ENCODE measurements at regions of chr5 and their contacts with region 1.

Region 1: GRCh38 chr5:136042665-136043121 is 13.9 kb downstream of the TGFBI start:
- DNase-seq: peak; percentile 77
- H3K4me3 ChIP-seq: no peak overlapping the region
- H3K27ac ChIP-seq: peak overlapping the region; percentile 85
- H3K4me1 ChIP-seq: peaks cover 38% of the 10 kb centered on the region
- H3K27me3 ChIP-seq: no peaks in the 10 kb centered on the region
- CTCF ChIP-seq: no peak
- POLR2A ChIP-seq: peak; percentile 42

Region 2: GRCh38 chr5:135993880-135994636 is 48.6 kb before region 1 on chr5:
- CTCF ChIA-PET with region 1: interaction called, 3 read pairs
- POLR2A ChIA-PET with region 1: no interaction called
- dilution Hi-C with region 1: no loop called
- intact Hi-C with region 1: loop called (anchors 2 kb)
- DNase-seq: peak; percentile 79
- H3K4me3 ChIP-seq: no peak overlapping the region
- H3K27ac ChIP-seq: peak overlapping the region; percentile 72
- H3K4me1 ChIP-seq: peaks cover 35% of the 10 kb centered on the region
- H3K27me3 ChIP-seq: no peaks in the 10 kb centered on the region
- CTCF ChIP-seq: no peak
- POLR2A ChIP-seq: no peak

Region 3: GRCh38 chr5:136028782-136029742 is 13.6 kb before region 1 on chr5 and contains the start of gene TGFBI:
- CTCF ChIA-PET with region 1: interaction called, 10 read pairs
- POLR2A ChIA-PET with region 1: interaction called, 3 read pairs
- dilution Hi-C with region 1: no loop called
- intact Hi-C with region 1: loop called (anchors 1 kb)
- DNase-seq: peak; percentile 47
- H3K4me3 ChIP-seq: peak within 1 kb of the TSS; percentile 22 to 45 (median 26)
- H3K27ac ChIP-seq: no peak within 1 kb of the TSS
- H3K4me1 ChIP-seq: peaks cover 3% of the 10 kb centered on the region
- H3K27me3 ChIP-seq: no peaks in the 10 kb centered on the region
- CTCF ChIP-seq: peak in 1 of 2 donors; percentile 9
- POLR2A ChIP-seq: no peak
- total RNA-seq, gene TGFBI: 6.5 and 8.7 TPM in 2 replicates

Region 4: GRCh38 chr5:136053336-136054141 is 10.8 kb after region 1 on chr5:
- CTCF ChIA-PET with region 1: interaction called, 11 read pairs
- POLR2A ChIA-PET with region 1: no interaction called
- dilution Hi-C with region 1: no loop called
- intact Hi-C with region 1: loop called (anchors 1 kb)
- DNase-seq: peak; percentile 77
- H3K4me3 ChIP-seq: no peak overlapping the region
- H3K27ac ChIP-seq: peak overlapping the region; percentile 84
- H3K4me1 ChIP-seq: peaks cover 36% of the 10 kb centered on the region
- H3K27me3 ChIP-seq: no peaks in the 10 kb centered on the region
- CTCF ChIP-seq: no peak
- POLR2A ChIP-seq: peak; percentile 28

Region 5: DNA sequence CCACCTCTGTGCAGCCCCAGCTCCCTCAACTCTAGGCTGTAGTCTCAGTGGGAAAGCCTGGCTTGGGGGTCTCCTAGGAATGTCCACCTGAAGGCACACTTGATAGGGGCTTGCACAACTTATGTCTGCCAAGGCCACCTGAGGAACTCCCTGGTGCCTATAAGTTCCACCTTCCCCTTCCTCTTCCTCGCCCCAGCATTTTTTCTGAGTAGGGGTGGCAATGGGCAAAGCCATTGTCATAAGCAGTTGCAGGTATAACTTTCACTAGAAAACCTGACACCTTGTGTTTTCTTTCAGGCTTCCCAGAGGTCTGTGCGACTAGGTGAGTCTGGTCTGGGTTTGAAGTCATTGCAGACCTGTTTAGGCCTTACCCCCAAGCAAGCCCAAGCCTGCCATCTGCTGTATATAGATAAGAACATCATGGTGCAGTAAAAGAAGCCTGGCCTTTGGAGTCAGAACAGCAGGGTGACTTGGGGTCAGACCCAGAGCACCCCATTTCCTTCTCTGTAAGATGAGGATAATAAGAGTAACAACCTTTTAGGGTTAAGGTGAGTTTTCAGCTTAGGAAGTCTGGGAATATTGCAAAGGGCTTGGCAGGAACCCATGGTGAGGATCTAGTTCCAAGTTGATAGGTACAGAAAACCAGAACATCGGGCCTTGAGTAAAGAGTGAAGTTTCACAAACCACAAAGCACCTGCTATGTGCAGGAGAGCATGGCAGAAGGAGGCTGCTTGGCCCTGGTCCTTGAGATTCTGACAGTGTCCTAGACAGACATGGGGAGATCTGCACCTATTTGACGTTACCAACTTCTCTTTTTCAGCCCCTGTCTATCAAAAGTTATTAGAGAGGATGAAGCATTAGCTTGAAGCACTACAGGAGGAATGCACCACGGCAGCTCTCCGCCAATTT is 19.9 kb after region 1 on chr5:
- CTCF ChIA-PET with region 1: interaction called, 8 read pairs
- POLR2A ChIA-PET with region 1: no interaction called
- dilution Hi-C with region 1: no loop called
- intact Hi-C with region 1: loop called (anchors 1 kb)
- DNase-seq: peak; percentile 40
- H3K4me3 ChIP-seq: no peak overlapping the region
- H3K27ac ChIP-seq: no peak overlapping the region
- H3K4me1 ChIP-seq: peaks cover 15% of the 10 kb centered on the region
- H3K27me3 ChIP-seq: no peaks in the 10 kb centered on the region
- CTCF ChIP-seq: peak; percentile 42 to 54
- POLR2A ChIP-seq: no peak

Region 6: DNA sequence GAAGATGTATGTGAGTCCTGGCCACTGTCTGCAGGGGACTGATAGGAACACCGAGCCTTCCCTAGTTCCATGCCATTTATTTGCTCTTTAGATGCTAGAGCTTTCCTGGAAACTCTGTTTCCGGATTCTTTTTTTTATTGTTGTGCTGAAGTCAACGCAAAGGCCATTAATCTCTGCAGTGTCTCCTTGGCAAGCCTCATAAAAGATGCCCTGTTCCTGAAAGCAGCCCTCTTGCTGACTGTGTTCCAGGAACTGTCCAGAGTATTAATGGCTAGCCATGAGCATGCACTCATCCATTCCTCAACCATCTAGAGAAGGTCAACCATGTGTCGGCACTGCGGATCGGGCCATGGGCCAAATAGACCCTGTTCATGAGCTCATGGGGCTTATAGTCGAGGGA is 47.1 kb after region 1 on chr5:
- CTCF ChIA-PET with region 1: no interaction called
- POLR2A ChIA-PET with region 1: no interaction called
- dilution Hi-C with region 1: no loop called
- intact Hi-C with region 1: no loop called
- DNase-seq: no peak
- H3K4me3 ChIP-seq: no peak overlapping the region
- H3K27ac ChIP-seq: no peak overlapping the region
- H3K4me1 ChIP-seq: peaks cover 10% of the 10 kb centered on the region
- H3K27me3 ChIP-seq: peaks cover 4 to 5% of the 10 kb centered on the region in 2 experiments
- CTCF ChIP-seq: no peak
- POLR2A ChIP-seq: no peak

Region 7: GRCh38 chr5:136132557-136133221 is 90.0 kb after region 1 on chr5 and contains the start of gene SMAD5:
- CTCF ChIA-PET with region 1: no interaction called
- POLR2A ChIA-PET with region 1: no interaction called
- dilution Hi-C with region 1: no loop called
- intact Hi-C with region 1: loop called (anchors 5 kb)
- DNase-seq: peak; percentile 97
- H3K4me3 ChIP-seq: peak within 1 kb of the TSS; percentile 72 to 96 (median 83)
- H3K27ac ChIP-seq: peak within 1 kb of the TSS; percentile 78
- H3K4me1 ChIP-seq: peaks cover 15% of the 10 kb centered on the region
- H3K27me3 ChIP-seq: peaks cover 7 to 21% of the 10 kb centered on the region in 2 experiments
- CTCF ChIP-seq: no peak
- POLR2A ChIP-seq: peak; percentile 64
- total RNA-seq, gene SMAD5: 65.4 and 66.0 TPM in 2 replicates

Region 8: DNA sequence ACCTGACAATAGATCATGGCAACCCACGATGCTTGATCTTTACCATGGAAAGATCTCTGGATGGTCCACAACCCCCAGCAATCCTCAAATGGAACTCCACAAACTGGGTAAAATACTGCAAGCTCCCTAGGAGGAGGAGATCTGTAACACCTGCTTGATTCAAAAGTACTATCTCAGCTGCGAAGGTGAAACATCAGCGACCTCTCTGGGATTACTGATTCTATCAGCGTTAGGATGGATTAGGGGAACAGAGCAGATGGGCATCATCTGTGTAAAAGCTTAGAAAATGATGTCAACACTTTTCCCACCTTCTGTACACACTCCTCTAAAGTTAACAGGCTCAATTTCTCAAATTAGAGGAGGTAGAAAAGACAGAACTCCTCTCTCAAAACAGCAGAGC is 354.2 kb after region 1 on chr5:
- CTCF ChIA-PET with region 1: no interaction called
- POLR2A ChIA-PET with region 1: no interaction called
- dilution Hi-C with region 1: no loop called
- intact Hi-C with region 1: no loop called
- DNase-seq: no peak
- H3K4me3 ChIP-seq: no peak overlapping the region
- H3K27ac ChIP-seq: no peak overlapping the region
- H3K4me1 ChIP-seq: no peaks in the 10 kb centered on the region
- H3K27me3 ChIP-seq: peaks cover 10 to 13% of the 10 kb centered on the region in 2 experiments
- CTCF ChIP-seq: no peak
- POLR2A ChIP-seq: no peak